Right ventricle myocardium inferior (tissue), 1 donor: ENCODE measurements at regions of chr5 and their contacts with region 1.

Region 1: GRCh38 chr5:132500931-132501630 is 10.5 kb upstream of the IRF1 start:
- DNase-seq: peak; percentile 79
- ATAC-seq: no peak

Region 2: GRCh38 chr5:132180134-132180745 is 320.8 kb before region 1 on chr5:
- intact Hi-C with region 1: loop called (anchors 5 kb)
- DNase-seq: no peak
- ATAC-seq: peak; percentile 42

Region 3: DNA sequence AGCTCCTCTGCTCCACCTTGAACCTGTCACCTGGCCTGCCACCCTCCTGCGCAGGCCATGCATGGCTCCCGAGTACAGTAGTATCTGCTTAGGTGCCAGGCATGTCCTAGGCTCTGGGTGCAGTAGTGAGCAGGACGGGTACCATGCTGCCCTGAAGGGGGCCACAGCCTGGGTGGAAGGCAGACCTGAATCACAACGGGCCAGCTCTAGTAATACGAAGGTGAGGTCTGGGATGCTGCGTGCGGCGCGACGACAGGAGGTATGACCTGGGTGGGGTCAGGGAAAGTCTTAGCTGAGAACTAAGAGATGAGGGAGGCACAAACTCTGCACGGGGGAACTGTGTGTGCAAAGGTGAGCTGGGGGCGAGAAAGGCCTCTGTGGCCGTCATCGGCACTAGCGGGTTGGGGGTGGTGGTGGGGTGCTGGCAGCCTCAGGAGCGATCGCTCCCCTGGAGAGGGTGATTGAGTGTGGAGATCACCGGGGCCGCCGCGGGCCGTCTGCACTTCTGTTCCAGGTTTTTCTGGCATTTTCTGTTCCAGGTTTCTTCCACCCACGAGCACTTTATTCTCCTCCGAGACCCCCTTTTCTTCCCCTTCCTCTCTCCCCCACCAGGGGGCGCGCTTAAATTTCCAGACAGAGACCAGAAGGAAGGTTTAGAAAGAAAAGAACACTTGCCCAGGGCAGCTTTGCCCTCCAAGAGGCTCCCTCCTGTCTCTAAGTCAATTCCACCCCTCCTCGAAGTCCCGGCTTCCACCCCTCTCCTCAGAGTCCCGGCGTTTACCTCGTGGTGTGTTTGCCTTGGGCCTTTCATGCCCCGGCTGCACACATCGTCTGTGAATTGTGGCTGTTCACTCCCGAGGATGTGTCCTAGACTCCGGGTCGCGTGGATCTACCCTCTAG is 228.5 kb before region 1 on chr5:
- intact Hi-C with region 1: loop called (anchors 5 kb)
- DNase-seq: peak; percentile 81
- ATAC-seq: no peak

Region 4: DNA sequence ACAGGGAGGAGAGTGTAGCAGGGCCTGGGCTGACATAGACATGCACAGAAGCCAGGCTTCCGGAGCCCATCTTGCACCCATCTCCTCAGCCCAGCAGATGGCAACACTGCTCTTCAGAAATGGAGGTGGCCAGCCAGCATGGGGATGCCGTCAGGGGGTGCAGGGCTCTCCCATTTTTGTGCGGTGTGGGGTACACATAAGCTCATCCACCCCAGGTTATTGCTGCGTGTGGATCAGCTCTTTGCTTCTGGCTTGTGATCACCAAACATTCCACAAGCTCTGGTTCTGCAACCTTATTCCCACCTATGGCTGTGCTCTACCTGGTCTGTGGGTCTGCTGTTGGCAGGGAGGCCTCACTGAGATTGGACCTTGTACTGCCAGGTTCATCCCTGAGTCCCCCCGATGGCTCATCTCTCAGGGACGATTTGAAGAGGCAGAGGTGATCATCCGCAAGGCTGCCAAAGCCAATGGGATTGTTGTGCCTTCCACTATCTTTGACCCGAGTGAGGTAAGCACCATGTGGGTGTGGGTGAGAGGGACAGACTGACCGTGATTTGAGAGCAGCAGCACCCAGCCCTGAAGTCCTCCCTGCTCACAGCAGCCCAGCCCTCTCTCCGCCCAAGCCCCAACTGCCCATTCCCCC is 114.3 kb before region 1 on chr5:
- intact Hi-C with region 1: loop called (anchors 1 kb)
- DNase-seq: peak; percentile 88
- ATAC-seq: peak; percentile 84

Region 5: GRCh38 chr5:132639706-132640130 is 138.6 kb after region 1 on chr5:
- intact Hi-C with region 1: no loop called
- DNase-seq: no peak
- ATAC-seq: no peak